G401 (cell line): ENCODE measurements at regions of chr1 and their contacts with region 1.

Region 1: DNA sequence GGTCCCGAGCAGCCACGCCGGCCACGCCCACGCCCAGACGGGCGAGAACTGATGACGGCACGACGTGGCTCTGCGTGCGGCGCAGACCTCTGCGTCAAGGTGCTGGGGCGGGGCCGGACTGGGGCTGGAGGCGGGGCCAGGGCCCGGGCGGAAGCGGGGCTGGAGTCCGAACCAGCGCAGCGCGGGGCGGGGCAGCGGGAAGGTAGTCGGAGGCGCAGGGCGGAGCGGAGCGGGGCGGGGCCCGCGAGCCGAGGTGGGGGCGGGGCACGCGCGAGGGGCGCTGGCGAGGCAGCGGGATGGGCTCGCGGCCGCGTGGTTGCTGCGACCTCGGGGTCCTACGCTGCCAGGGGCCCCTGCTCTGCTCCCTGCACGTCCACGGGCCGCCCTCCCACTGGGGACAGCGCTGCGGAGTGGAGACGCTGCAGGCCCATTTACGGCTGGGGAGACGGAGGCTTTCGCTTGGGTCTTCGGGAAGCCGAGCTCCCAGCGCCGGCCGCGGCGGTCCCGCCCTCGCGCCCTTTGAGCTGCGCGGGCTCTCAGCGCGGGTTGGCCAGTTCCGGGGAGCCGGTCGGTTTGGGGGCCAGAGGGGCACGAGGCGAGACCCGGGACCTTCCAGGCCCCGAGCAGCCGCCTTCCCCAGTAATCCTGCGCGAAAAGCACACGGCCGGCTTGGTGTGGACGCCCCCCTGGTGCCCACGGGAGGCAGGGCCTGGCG is at the start of gene PEX10:
- DNase-seq: peak; percentile 95
- total RNA-seq, gene PEX10: 84.2 and 96.0 TPM in 2 replicates

Region 2: GRCh38 chr1:2372551-2373490 is 39.9 kb before region 1 on chr1:
- in situ Hi-C with region 1: no loop called
- DNase-seq: no peak

Region 3: DNA sequence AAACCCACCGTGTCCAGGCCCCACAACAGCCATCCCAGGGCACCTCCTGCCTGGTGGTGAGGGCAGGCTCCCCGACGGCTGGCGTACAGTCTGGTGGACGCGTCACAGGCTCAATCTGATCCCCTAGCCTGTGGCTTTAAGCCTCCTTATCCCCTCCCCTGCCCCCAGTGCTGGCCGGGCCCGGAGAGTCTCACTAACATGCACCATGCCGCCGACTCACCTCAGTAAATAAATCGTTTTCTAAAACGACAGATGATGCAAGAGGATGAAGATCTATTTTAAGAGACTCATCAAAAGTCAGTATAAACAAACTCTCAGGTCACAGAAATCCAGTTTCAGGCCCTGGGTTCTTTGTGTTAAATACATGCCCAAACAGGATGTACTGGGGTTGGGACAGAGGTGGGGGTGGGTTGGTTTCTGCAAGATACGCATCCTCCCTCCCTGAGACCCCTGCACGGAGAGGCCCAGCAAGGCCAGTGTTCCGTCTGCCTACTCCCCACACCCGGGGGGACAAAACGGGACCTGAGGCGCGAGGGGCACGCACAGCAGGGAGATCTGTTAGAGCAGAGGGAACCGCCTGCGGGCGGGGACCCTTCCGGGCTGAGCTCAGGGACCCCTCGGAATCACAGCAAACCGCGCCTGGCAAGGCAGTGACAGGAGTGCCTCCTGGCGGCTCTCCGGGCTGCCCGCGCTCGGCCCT is 110.7 kb after region 1 on chr1:
- in situ Hi-C with region 1: loop called (anchors 25 kb)
- DNase-seq: no peak